ENCODE measurements at regions of chr10 and their contacts with region 1.

Region 1: GRCh38 chr10:34637418-34637911 is 177.6 kb downstream of the PARD3 start:
- DNase-seq: peak; percentile 75
- H3K4me3 Mint-ChIP-seq: no peak overlapping the region
- H3K27ac Mint-ChIP-seq: no peak overlapping the region
- H3K4me1 Mint-ChIP-seq: peaks cover 7% of the 10 kb centered on the region
- H3K27me3 Mint-ChIP-seq: peaks cover 2% of the 10 kb centered on the region

Region 2: DNA sequence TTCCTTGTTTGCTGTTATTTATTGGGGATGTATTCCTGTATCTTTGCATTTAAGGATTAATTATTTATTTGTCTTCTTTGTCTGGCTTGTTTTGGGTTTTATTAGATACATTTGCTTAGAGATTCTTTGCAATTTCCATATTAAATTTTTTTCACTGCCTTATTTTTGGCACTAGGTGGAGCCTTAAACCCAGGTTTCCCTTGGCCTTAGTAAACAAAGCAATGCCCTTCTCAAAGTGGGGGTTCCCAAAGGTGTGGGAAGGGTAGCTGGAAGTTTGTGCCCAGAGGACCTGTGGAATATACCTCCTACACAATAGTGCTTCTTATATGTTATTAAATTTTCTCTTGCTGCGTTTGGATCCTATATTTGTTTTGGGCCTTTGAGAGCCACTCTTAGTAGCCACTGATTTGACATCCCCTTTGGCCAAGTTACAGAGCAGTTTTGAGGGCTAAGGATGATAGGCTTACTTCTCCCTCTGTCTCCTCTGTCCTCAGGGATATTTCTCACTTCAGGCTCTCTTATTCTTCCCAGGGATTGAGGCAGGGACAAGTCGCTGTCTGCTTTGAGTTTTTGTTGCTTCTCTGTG is 1841.8 kb before region 1 on chr10:
- CTCF ChIA-PET with region 1: no interaction called
- POLR2A ChIA-PET with region 1: no interaction called
- intact Hi-C with region 1: loop called (anchors 5 kb)
- DNase-seq: no peak
- H3K4me3 Mint-ChIP-seq: no peak overlapping the region
- H3K27ac Mint-ChIP-seq: no peak overlapping the region
- H3K4me1 Mint-ChIP-seq: no peaks in the 10 kb centered on the region
- H3K27me3 Mint-ChIP-seq: no peaks in the 10 kb centered on the region

Region 3: GRCh38 chr10:33193057-33193700 is 1444.3 kb before region 1 on chr10:
- CTCF ChIA-PET with region 1: interaction called, 15 read pairs
- POLR2A ChIA-PET with region 1: no interaction called
- intact Hi-C with region 1: loop called (anchors 2 kb)
- DNase-seq: peak; percentile 84
- H3K4me3 Mint-ChIP-seq: no peak overlapping the region
- H3K27ac Mint-ChIP-seq: no peak overlapping the region
- H3K4me1 Mint-ChIP-seq: peaks cover 5% of the 10 kb centered on the region
- H3K27me3 Mint-ChIP-seq: peaks cover 8% of the 10 kb centered on the region

Region 4: GRCh38 chr10:34522546-34522945 is 114.9 kb before region 1 on chr10:
- CTCF ChIA-PET with region 1: interaction called, 4 read pairs
- POLR2A ChIA-PET with region 1: no interaction called
- intact Hi-C with region 1: loop called (anchors 2 kb)
- DNase-seq: no peak
- H3K4me3 Mint-ChIP-seq: no peak overlapping the region
- H3K27ac Mint-ChIP-seq: no peak overlapping the region
- H3K4me1 Mint-ChIP-seq: peaks cover 6% of the 10 kb centered on the region
- H3K27me3 Mint-ChIP-seq: peaks cover 11% of the 10 kb centered on the region

Region 5: GRCh38 chr10:34624323-34625153 is 12.9 kb before region 1 on chr10:
- CTCF ChIA-PET with region 1: interaction called, 11 read pairs
- POLR2A ChIA-PET with region 1: no interaction called
- intact Hi-C with region 1: no loop called
- DNase-seq: no peak
- H3K4me3 Mint-ChIP-seq: no peak overlapping the region
- H3K27ac Mint-ChIP-seq: no peak overlapping the region
- H3K4me1 Mint-ChIP-seq: no peaks in the 10 kb centered on the region
- H3K27me3 Mint-ChIP-seq: peaks cover 3% of the 10 kb centered on the region

Region 6: GRCh38 chr10:34647875-34648865 is 10.7 kb after region 1 on chr10:
- CTCF ChIA-PET with region 1: interaction called, 20 read pairs
- POLR2A ChIA-PET with region 1: no interaction called
- intact Hi-C with region 1: no loop called
- DNase-seq: no peak
- H3K4me3 Mint-ChIP-seq: no peak overlapping the region
- H3K27ac Mint-ChIP-seq: no peak overlapping the region
- H3K4me1 Mint-ChIP-seq: no peaks in the 10 kb centered on the region
- H3K27me3 Mint-ChIP-seq: peaks cover 6% of the 10 kb centered on the region

Region 7: DNA sequence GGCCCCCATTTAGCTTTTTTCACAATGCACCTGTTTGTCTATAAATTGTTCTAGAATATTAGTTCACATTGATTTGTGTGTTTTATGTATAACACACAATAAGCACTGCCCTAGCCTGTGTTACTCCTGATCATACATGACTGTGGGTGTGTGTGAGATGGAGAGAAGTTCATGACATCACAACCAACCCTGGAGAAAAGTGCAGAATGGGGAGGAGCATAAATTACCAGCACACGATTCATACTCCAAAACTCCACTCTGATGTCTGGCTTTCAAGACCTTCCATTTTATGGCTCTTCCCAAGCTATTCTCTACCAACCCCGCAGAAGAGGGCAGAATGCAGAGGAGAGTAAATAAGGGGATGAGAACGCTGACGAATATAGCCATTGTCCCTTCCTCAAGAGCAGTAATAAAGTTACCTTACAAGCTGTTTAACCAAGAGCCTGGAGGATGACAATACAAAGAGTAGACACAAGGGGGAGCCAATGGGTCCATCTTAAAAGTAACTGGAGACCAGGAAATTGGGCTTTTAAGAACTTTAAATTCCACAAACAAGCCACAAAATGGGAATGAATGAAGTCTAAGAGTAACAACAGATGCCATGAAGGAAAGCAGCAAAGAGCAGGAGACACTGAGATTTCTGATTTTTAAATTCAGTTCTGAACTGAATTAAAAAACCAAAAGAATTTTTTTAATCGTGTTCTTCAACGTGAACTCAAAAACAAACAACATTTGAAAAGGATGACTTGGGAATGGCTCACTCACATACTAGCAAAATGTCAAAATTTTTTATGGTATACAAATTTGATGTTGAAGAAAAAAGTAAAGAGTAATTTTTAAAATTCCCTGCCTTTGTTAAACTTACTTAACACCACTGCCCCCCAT is 18.1 kb after region 1 on chr10:
- CTCF ChIA-PET with region 1: interaction called, 13 read pairs
- POLR2A ChIA-PET with region 1: no interaction called
- intact Hi-C with region 1: no loop called
- DNase-seq: peak; percentile 15
- H3K4me3 Mint-ChIP-seq: no peak overlapping the region
- H3K27ac Mint-ChIP-seq: no peak overlapping the region
- H3K4me1 Mint-ChIP-seq: no peaks in the 10 kb centered on the region
- H3K27me3 Mint-ChIP-seq: peaks cover 9% of the 10 kb centered on the region

Region 8: DNA sequence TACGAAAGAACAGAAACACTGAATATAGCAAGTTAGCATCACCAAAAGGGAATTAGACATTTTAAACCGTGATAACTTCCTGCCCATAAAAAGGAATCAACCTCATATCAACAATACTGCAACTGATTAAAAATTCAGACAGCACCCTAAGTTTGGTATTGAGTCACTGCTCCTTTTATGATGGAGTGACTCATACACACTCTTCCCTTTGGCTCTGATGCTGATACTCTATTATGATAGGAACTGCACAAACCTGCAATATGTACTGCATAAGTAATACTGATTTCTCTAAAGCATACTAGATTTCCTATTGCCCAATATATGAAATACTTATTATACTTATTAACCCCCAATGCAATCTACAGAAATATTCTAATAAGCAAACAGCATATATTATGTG is 59.0 kb after region 1 on chr10:
- CTCF ChIA-PET with region 1: no interaction called
- POLR2A ChIA-PET with region 1: no interaction called
- intact Hi-C with region 1: no loop called
- DNase-seq: no peak
- H3K4me3 Mint-ChIP-seq: no peak overlapping the region
- H3K27ac Mint-ChIP-seq: no peak overlapping the region
- H3K4me1 Mint-ChIP-seq: peaks cover 7% of the 10 kb centered on the region
- H3K27me3 Mint-ChIP-seq: peaks cover 4% of the 10 kb centered on the region

Region 9: DNA sequence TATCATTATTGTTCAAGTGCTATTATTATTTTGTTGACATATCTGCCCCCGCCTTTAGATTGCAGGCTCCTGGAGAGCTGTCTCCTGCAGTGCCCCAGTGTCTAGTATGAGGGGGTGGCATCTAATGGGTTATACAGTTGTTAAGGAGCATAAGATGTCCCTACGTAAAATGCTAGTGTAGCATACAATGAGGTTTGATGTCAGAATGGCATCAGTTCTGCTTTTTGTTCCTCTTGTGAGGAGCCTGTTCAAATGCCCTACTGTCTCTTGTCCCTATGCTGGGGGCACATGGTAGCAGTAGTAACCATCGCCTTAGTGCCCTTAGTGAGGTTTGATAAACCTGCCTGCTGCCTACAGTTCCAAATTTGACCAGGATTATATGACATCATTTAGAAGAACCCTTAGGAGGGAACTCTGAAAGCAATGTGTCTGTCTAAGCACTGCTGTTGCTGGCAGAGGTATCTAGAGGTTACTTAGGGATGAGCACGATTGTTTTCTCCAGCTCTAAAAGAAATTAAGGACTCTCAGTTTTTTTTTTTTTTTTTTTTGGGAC is 498.9 kb after region 1 on chr10:
- CTCF ChIA-PET with region 1: no interaction called
- POLR2A ChIA-PET with region 1: no interaction called
- intact Hi-C with region 1: no loop called
- DNase-seq: no peak
- H3K4me3 Mint-ChIP-seq: no peak overlapping the region
- H3K27ac Mint-ChIP-seq: no peak overlapping the region
- H3K4me1 Mint-ChIP-seq: peaks cover 36% of the 10 kb centered on the region
- H3K27me3 Mint-ChIP-seq: no peaks in the 10 kb centered on the region

Measured in activated CD4-positive, alpha-beta memory T cell treated with anti-CD3 and anti-CD28 coated beads for 36 hours (primary cell).